Sigmoid colon (tissue), 7 donors: ENCODE measurements at regions of chr4 and their contacts with region 1.

Region 1: DNA sequence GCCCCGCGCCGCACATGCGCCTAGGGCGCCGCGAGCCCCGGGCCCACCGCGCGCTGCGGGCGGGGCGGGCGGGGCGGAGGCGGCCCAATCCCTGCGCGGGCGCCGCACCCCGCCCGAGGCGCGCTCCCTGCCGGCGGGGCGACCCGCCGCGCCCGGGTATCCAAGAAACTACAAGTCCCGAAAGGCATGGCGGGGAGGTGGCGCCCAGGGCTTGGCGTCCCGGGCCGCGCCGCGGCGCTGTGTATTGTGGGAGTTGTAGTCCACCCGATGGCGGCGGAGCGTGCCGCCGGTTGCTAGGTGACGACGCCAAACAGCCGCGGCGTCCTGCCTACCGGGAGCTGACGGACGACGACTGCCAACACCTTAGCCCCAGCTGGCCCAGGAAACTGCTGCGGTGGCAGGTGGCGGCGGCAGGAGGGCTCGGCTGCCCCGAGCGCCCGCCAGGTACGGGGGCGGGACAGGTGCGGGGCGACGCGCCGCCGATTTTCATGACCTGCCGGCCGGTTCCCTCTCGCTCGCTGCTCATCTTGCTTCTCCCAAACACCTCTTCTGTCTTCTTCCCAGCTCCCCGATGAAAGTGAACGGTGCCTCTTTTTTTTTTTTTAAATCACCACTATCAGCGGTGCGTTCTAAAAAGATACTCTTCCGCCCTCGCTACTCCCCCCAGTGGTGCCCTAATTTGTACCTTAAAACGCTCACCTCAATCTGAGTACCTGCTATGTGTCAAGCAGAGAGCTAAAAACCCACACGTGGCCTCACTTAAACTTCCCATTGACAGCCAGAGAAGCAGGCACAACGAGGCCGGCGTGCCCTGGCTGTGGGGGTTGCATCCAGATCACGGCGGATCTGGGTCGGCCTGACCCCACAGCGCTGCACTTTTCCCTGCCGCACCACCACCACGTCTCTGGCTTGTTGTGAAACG is at the start of gene CFAP99:
- DNase-seq: peak; percentile 98
- H3K4me3 ChIP-seq: peak within 1 kb of the TSS; percentile 34 to 73 (median 69)
- H3K27ac ChIP-seq: peak within 1 kb of the TSS in 2 of 4 donors; percentile 20 to 43
- H3K4me1 ChIP-seq: peaks cover 0 to 33% (median 29%) of the 10 kb centered on the region in 4 donors
- H3K27me3 ChIP-seq: peaks cover 8 to 84% (median 57%) of the 10 kb centered on the region in 3 donors
- CTCF ChIP-seq: no peak
- EP300 ChIP-seq: no peak
- POLR2A ChIP-seq: no peak
- total RNA-seq, gene CFAP99: not detected

Region 2: GRCh38 chr4:2220016-2220630 is 198.8 kb before region 1 on chr4:
- intact Hi-C with region 1: loop called (anchors 5 kb)
- DNase-seq: peak; percentile 77
- H3K4me3 ChIP-seq: no peak overlapping the region
- H3K27ac ChIP-seq: no peak overlapping the region
- H3K4me1 ChIP-seq: peaks cover 0 to 7% (median 0%) of the 10 kb centered on the region in 4 donors
- H3K27me3 ChIP-seq: no peaks in the 10 kb centered on the region
- CTCF ChIP-seq: peak; percentile 75 to 78 (median 76)
- EP300 ChIP-seq: no peak
- POLR2A ChIP-seq: no peak

Region 3: GRCh38 chr4:2241410-2242353 is 177.2 kb before region 1 on chr4 and contains the starts of genes HAUS3 and POLN:
- intact Hi-C with region 1: loop called (anchors 5 kb)
- DNase-seq: peak; percentile 99
- H3K4me3 ChIP-seq: peak within 1 kb of the TSS; percentile 72 to 86 (median 85)
- H3K27ac ChIP-seq: peak within 1 kb of the TSS; percentile 80 to 84 (median 82)
- H3K4me1 ChIP-seq: peaks cover 0 to 51% (median 41%) of the 10 kb centered on the region in 4 donors
- H3K27me3 ChIP-seq: no peaks in the 10 kb centered on the region
- CTCF ChIP-seq: no peak
- EP300 ChIP-seq: no peak
- POLR2A ChIP-seq: peak; percentile 76 to 84
- total RNA-seq, gene HAUS3: 12.1 to 18.5 (median 16.4) TPM
- total RNA-seq, gene POLN: 1.8 to 9.4 (median 2.6) TPM

Region 4: DNA sequence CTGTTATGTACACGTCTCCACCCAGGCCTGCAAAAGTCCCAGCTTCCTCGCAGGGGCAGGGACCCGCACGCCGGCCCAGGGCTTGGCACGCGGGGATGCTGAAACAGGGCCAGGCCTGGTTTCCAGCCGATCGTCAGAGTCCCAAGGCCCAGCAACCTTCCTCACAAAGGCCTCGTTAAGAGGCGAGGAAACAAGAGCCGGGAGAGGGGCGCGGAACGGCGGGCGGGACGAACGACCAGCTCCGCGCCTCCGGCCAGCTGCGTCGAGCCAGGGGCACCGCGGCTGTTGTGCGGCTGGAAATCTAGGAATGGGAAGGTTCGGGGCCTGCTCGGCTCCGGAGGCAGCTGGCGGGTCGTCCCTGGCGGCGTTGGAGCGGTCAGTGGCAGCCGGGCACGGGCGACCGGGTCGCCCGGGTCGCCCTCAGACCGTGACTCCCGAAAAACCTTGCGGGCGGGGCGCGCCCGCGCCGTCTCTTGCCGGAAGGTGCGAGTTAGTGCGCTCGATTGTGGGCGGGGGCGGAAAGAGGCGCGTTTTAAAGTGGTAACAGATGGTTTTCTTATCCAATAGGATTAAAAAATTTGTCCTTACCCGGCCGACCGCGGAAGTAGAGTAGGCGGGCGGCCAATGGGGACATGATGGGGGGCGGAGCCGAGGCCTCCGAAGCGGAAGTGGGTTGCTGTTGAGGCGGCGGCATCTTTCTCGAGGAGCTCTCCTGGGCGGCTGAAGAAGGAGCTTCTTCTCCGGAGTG is 49.7 kb after region 1 on chr4 and contains the start of gene RNF4:
- intact Hi-C with region 1: loop called (anchors 5 kb)
- DNase-seq: peak; percentile 98
- H3K4me3 ChIP-seq: peak within 1 kb of the TSS; percentile 84 to 93 (median 86)
- H3K27ac ChIP-seq: peak within 1 kb of the TSS; percentile 89 to 98 (median 94)
- H3K4me1 ChIP-seq: peaks cover 0 to 34% (median 27%) of the 10 kb centered on the region in 4 donors
- H3K27me3 ChIP-seq: no peaks in the 10 kb centered on the region
- CTCF ChIP-seq: no peak
- EP300 ChIP-seq: no peak
- POLR2A ChIP-seq: peak in 1 of 2 donors; percentile 56
- total RNA-seq, gene RNF4: 28.5 to 51.0 (median 40.4) TPM

Region 5: GRCh38 chr4:2963175-2963965 is 544.5 kb after region 1 on chr4 and contains the starts of genes GRK4 and NOP14:
- intact Hi-C with region 1: loop called (anchors 5 kb)
- DNase-seq: peak; percentile 99
- H3K4me3 ChIP-seq: peak within 1 kb of the TSS; percentile 85 to 98 (median 90)
- H3K27ac ChIP-seq: peak within 1 kb of the TSS; percentile 83 to 92 (median 86)
- H3K4me1 ChIP-seq: peaks cover 0 to 29% (median 24%) of the 10 kb centered on the region in 4 donors
- H3K27me3 ChIP-seq: no peaks in the 10 kb centered on the region
- CTCF ChIP-seq: peak in 1 of 4 experiments; percentile 26
- EP300 ChIP-seq: peak in 1 of 4 donors; percentile 41
- POLR2A ChIP-seq: peak in 1 of 2 donors; percentile 18
- total RNA-seq, gene GRK4: 3.9 to 10.2 (median 6.7) TPM
- total RNA-seq, gene NOP14: 12.5 to 19.1 (median 15.1) TPM